Ovary (tissue), 10 donors: ENCODE measurements at regions of chr3 and their contacts with region 1.

Region 1: DNA sequence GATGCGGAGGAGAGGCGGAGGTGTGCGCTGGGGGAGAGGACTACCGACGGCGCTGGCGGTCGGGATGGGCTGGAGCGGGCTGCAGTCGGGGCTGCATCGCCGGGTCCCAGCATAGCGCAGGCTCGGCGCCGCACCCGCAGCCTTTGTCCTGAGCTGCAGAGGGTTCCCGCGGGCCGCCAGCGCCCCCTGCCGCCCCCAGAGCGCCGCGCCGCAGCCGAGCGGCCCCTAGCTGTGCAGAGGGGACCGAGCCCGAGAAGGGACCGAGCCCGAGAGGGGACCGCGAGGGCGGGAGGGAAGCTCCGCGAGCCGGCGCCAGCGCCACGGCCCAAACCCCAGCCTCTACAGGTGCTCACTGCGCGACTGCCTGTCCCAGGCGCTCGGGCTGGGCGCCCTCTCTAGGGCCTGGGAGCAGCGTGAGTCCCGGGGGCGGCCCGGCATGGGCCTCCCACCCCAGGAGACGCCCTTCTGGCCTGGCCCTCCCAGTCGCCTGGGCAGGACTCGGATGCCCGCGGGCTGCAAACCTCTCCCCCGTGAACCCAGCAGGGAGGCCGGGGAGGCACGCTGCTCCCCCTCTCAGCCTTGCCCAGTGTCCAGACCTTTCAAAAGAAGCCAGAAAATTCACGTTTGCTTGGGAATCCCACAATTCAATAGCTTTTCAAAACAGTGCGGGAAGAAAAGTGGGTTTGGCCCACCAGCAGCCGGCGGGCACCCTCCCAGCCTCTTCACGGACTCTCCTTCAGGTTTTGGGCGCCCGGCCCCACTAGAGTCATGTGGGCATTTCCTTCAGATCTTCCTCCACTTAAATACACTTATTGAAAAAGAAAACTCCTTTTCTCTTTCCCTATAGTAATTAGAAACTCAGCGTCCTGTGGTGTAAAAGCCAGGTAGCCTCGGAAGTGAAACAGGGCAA is 134.7 kb downstream of the TPRA1 start:
- DNase-seq: peak; percentile 61 to 87 (median 75)
- H3K4me3 ChIP-seq: no peak overlapping the region
- H3K27ac ChIP-seq: no peak overlapping the region
- H3K4me1 ChIP-seq: peaks cover 11% of the 10 kb centered on the region
- H3K27me3 ChIP-seq: no peaks in the 10 kb centered on the region
- CTCF ChIP-seq: peak; percentile 65 to 90 (median 85)
- EP300 ChIP-seq: no peak
- POLR2A ChIP-seq: no peak

Region 2: DNA sequence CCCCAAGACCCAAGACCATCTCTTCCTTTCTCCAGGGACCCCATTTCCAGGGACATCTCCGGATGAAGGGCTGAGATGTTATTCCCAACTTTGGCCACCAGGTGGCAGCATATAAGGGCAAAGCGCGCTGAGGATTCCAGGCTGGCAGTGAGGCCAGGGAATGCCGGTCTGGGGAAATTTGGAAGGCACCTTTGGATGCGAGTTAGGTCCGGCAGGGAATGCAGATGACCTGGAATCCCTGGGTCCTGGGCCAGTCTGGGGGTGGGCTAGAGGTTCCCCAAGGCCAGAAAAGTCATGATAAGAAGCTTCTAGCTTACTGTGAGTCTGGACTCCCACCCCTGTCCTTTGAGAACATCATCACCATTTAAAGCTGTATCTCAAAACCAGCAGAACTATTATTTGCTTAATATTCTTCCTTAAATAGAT is 933.4 kb before region 1 on chr3:
- intact Hi-C with region 1: loop called in 3 of 4 experiments (anchors 5 to 10 kb)
- DNase-seq: peak; percentile 44 to 72 (median 59)
- H3K4me3 ChIP-seq: no peak overlapping the region
- H3K27ac ChIP-seq: no peak overlapping the region
- H3K4me1 ChIP-seq: no peaks in the 10 kb centered on the region
- H3K27me3 ChIP-seq: no peaks in the 10 kb centered on the region
- CTCF ChIP-seq: peak; percentile 61 to 89 (median 61)
- EP300 ChIP-seq: no peak
- POLR2A ChIP-seq: no peak

Region 3: GRCh38 chr3:126746395-126747177 is 709.2 kb before region 1 on chr3:
- intact Hi-C with region 1: loop called in 3 of 4 experiments (anchors 5 to 10 kb)
- DNase-seq: peak in 3 of 5 donors; percentile 26 to 54 (median 42)
- H3K4me3 ChIP-seq: no peak overlapping the region
- H3K27ac ChIP-seq: peak overlapping the region in 1 of 2 donors; percentile 45
- H3K4me1 ChIP-seq: peaks cover 1% of the 10 kb centered on the region
- H3K27me3 ChIP-seq: no peaks in the 10 kb centered on the region
- CTCF ChIP-seq: peak in 1 of 3 donors; percentile 7
- EP300 ChIP-seq: no peak
- POLR2A ChIP-seq: no peak

Region 4: GRCh38 chr3:126765187-126766069 is 690.4 kb before region 1 on chr3:
- intact Hi-C with region 1: no loop called
- DNase-seq: no peak
- H3K4me3 ChIP-seq: no peak overlapping the region
- H3K27ac ChIP-seq: no peak overlapping the region
- H3K4me1 ChIP-seq: no peaks in the 10 kb centered on the region
- H3K27me3 ChIP-seq: no peaks in the 10 kb centered on the region
- CTCF ChIP-seq: no peak
- EP300 ChIP-seq: no peak
- POLR2A ChIP-seq: no peak

Region 5: GRCh38 chr3:126982471-126983175 is 473.2 kb before region 1 on chr3 and contains the start of gene PLXNA1:
- intact Hi-C with region 1: loop called in 3 of 4 experiments (anchors 5 to 10 kb)
- DNase-seq: peak; percentile 61 to 83 (median 73)
- H3K4me3 ChIP-seq: peak within 1 kb of the TSS; percentile 81
- H3K27ac ChIP-seq: peak within 1 kb of the TSS; percentile 0 to 5
- H3K4me1 ChIP-seq: peaks cover 15% of the 10 kb centered on the region
- H3K27me3 ChIP-seq: no peaks in the 10 kb centered on the region
- CTCF ChIP-seq: peak; percentile 45 to 88 (median 70)
- EP300 ChIP-seq: no peak
- POLR2A ChIP-seq: no peak
- total RNA-seq, gene PLXNA1: 13.8 to 47.2 (median 27.6) TPM